Endothelial cell of umbilical vein (primary cell): ENCODE measurements at regions of chr2 and their contacts with region 1.

Region 1: DNA sequence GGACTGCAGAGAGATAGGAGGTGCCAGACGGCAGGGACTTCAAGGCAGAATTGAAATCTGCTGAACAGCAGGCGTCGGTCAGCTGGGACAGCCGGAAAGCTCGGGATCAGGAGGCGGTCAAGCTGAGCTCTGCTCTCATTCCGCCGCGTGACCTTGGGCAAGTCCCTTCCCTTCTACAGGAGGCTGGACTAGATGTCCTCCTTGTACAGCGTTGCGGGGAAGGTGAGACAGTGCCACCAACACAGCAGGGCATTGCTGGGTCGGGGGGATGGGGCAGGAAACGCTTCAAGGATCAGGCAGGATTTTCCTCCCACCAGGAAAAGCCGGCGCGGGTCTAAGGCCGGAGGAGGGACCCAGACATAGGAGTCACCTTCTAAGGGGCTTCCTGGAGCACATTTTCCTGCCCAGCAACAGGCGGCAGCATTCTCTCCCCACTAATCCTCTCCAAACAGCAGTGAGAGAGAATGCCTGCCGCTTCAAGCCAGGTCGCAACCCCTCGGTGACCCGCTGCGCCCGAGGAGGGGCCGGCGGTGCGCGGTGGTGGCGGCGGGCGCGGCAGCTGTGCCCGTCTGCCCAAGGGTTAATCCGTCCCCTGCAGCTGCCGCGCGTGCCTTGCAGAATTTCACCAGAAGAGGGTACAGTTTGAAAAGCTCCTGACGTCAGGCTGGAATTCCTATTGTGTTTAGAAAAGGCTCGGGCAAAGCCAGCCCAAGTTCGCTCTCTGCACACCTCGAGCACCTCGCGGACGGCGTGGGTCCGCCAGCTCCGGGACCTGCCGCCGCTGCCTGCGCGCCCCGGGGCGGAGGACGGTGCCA is at the start of gene KCNF1:
- DNase-seq: peak; percentile 66
- H3K4me3 ChIP-seq: peak within 1 kb of the TSS; percentile 9 to 25 (median 17)
- H3K27ac ChIP-seq: no peak within 1 kb of the TSS
- H3K4me1 ChIP-seq: peaks cover 5% of the 10 kb centered on the region
- H3K27me3 ChIP-seq: peaks cover 25 to 27% of the 10 kb centered on the region in 2 experiments
- CTCF ChIP-seq: peak; percentile 20 to 32
- POLR2A ChIP-seq: no peak
- total RNA-seq, gene KCNF1: 0.28 and 0.42 TPM in 2 replicates

Region 2: DNA sequence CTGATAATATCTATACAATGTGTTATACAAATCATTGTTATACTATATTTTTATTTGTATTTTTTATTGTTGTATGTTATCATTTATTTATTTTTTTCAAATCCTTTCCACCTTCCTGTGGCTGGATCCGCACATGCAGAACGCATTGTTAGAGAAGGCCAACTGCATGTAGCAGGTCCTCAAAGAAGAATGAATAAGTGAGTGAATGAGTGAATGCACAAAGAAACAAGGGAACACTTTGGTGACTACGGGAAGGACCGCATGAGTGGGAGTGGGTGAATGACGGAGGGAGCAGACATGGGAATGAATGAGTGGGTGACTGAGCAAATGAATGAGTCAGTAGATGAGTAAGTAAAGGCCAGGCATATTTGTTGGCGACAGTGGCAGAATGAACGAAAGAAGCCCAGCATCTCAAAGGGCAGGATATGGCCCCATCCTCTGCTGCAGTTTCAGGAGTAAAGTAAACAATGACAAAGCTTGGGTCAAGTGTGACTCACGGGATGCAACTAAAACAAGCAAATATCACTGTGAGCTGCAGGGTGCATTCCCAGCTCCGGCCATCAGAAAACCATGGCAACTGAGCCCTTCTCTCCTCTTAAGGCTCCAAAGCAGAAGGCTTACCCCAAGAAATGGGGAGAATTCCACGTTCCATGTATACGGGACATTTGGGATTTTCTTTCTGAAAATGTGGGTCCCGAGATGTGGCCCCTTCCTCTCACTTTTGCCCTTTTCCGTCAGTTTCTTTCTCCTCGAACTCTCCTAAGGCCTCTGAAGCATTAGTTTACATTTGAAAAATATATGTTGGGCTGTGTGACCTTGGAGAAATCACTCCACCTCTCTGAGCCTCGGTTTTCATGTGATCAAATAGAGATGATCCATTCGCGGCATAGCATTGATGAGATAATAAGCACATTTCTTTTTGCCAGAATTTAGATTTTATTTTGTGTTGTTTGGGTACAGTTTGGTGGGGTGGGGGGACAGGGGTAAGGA is 24.8 kb after region 1 on chr2:
- CTCF ChIA-PET with region 1: interaction called, 4 read pairs
- POLR2A ChIA-PET with region 1: no interaction called
- dilution Hi-C with region 1: no loop called
- intact Hi-C with region 1: loop called (anchors 1 kb)
- DNase-seq: peak; percentile 96
- H3K4me3 ChIP-seq: no peak overlapping the region
- H3K27ac ChIP-seq: peak overlapping the region; percentile 88
- H3K4me1 ChIP-seq: peaks cover 31% of the 10 kb centered on the region
- H3K27me3 ChIP-seq: peaks cover 0 to 2% of the 10 kb centered on the region in 2 experiments
- CTCF ChIP-seq: no peak
- POLR2A ChIP-seq: no peak

Region 3: DNA sequence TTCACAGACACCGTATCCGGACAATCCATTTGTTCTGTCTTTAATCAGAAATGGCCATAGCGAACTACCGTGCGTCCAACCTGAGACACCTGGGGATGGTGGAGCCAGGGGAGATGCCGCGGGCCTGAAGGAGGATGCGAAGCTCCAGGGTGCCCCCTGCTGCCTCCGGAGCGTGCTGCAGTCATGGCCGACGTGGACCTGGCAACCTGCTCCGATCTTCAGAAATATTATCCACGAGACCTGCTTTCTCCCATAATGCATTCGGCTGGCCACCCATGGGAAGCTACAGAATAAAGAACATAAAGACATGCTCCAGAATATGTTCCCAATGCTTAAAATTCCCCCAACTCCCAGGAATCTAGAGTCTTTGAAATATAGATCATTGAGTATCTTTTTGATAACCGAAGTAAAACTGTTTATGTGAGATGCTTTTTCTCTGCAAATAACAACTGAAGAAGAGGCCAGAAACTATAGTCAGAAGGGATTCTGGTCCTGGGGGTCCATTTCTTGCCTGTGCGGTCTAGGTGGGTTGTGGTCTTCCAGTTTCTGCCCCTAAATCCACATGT is 213.1 kb after region 1 on chr2:
- CTCF ChIA-PET with region 1: interaction called, 16 read pairs
- POLR2A ChIA-PET with region 1: no interaction called
- dilution Hi-C with region 1: no loop called
- intact Hi-C with region 1: loop called (anchors 1 kb)
- DNase-seq: peak; percentile 52
- H3K4me3 ChIP-seq: no peak overlapping the region
- H3K27ac ChIP-seq: no peak overlapping the region
- H3K4me1 ChIP-seq: peaks cover 15% of the 10 kb centered on the region
- H3K27me3 ChIP-seq: peaks cover 0 to 1% of the 10 kb centered on the region in 2 experiments
- CTCF ChIP-seq: peak; percentile 85 to 94
- POLR2A ChIP-seq: no peak